ENCODE measurements at regions of chr16 and their contacts with region 1.

Region 1: DNA sequence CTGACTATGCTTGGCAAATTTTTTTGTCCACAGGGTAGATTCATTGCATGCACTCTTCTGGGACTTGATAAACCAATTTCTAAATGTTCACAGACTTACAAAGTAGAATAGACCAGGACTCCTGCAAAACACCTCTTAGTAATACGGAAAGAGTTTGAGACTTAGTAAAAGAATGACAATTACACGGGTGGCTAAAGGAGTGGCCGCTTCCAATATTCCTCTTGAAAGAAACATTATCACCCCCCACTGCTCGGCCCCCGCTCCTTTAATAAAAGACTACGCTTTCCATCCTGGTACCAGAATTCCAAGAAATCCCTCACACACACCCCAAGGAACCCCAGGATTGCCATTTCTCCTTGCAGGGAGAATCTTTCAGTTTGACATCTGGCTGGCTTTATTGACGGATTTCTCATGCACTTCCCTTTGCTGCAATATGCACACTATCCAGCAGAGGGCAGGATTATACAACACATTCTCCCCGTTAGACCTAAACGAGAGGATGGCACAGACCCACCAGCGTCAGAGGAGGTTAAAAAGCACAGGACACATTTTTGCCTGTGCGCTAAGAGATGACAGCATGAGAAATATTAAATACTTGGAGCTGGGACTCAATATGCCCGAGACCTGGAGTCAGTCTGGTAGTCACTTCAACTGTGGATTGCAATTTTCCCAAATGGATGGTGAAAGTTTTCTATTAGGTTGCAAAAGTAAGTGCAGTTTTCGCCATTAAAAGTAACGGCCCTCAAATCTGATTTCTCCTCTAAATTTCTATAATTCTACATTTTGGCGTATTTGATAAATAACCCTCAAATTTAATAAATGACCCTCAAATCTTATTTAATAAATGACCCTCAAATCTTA is 46.6 kb upstream of the NUDT7 start:
- DNase-seq: peak; percentile 71
- CTCF ChIP-seq: peak; percentile 91

Region 2: GRCh38 chr16:77596261-77596660 is 79.4 kb before region 1 on chr16:
- in situ Hi-C with region 1: no loop called
- DNase-seq: no peak
- CTCF ChIP-seq: no peak

Region 3: DNA sequence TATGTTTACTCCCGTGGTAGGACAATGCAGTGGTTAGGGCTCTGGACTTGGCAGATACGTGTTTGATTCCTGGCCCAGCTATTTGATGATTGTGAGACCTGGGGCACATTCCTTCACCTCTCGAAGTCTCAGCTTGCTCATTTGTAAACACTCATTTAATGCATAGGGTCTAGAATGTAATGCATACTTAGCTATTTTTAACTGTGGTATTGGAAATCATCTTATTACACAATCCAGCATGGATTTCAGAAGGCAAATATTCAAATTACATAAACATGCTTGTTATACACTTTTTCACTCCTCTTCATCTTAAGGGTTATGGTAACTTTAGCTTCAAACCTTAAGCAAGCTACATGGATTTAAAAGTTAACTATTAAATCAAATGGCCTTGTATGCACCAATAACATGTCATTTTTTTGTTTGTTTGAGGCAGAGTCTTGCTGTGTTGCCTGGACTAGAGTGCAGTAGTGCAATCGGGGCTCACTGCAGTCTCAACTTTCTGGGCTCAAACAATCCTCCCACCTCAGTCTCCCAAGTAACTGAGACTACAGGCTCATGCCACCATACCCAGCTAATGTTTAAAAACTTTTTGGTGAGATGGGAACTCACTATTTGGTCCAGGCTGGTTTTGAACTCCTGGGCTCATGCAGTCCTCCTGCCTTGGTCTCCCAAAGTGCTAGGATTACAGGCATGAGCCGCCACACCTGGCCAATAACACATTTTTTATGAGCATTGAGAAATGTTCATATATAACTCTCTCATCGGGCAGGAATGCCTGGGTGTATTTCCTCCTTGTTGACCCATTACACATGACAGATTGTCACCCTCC is 165.2 kb after region 1 on chr16:
- in situ Hi-C with region 1: no loop called
- DNase-seq: no peak
- CTCF ChIP-seq: no peak

Region 4: GRCh38 chr16:77971306-77972271 is 295.9 kb after region 1 on chr16:
- in situ Hi-C with region 1: loop called (anchors 10 kb)
- DNase-seq: peak; percentile 72
- CTCF ChIP-seq: peak; percentile 78

Measured in GM13976 (cell line).